Naive thymus-derived CD4-positive, alpha-beta T cell (primary cell): ENCODE measurements at regions of chr13 and their contacts with region 1.

Region 1: GRCh38 chr13:73880365-73880764 is 253.8 kb downstream of the KLF12 start:
- DNase-seq: no peak
- ATAC-seq: no peak
- H3K4me3 ChIP-seq: no peak overlapping the region
- H3K4me3 Mint-ChIP-seq: peak overlapping the region in 8 of 10 donors; percentile 0 to 55 (median 21)
- H3K27ac ChIP-seq: no peak overlapping the region
- H3K27ac Mint-ChIP-seq: peak overlapping the region in 5 of 9 donors; percentile 16 to 69 (median 31)
- H3K4me1 ChIP-seq: peaks cover 12 to 16% of the 10 kb centered on the region in 2 donors
- H3K4me1 Mint-ChIP-seq: peaks cover 10 to 78% (median 57%) of the 10 kb centered on the region in 7 donors
- H3K27me3 ChIP-seq: no peaks in the 10 kb centered on the region
- H3K27me3 Mint-ChIP-seq: no peaks in the 10 kb centered on the region

Region 2: DNA sequence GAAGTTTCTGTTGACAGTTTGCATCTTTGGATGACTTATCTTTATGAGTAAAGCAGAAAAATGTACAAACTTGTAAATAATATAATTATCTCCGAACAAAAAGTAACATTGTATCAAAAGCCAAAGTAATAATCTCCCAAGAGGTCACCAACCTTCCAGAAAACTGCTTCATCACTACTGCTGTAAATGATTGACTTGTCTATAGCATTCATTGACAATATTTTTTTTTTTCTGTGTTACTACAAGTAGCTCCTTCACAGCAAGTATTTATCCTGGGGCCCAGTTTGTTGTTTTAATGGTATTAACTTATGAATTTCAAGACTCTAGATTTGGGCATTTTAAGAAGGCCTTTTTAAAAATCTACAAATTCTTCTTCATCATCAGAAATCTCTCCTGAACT is 11.4 kb after region 1 on chr13:
- CTCF ChIA-PET with region 1: interaction called, 3 read pairs
- POLR2A ChIA-PET with region 1: no interaction called
- intact Hi-C with region 1: loop called in 1 of 2 experiments (anchors 1 kb)
- DNase-seq: no peak
- ATAC-seq: no peak
- H3K4me3 ChIP-seq: no peak overlapping the region
- H3K4me3 Mint-ChIP-seq: no peak overlapping the region
- H3K27ac ChIP-seq: no peak overlapping the region
- H3K27ac Mint-ChIP-seq: peak overlapping the region in 4 of 9 donors; percentile 2 to 44 (median 12)
- H3K4me1 ChIP-seq: no peaks in the 10 kb centered on the region
- H3K4me1 Mint-ChIP-seq: peaks cover 0 to 52% (median 37%) of the 10 kb centered on the region in 7 donors
- H3K27me3 ChIP-seq: no peaks in the 10 kb centered on the region
- H3K27me3 Mint-ChIP-seq: no peaks in the 10 kb centered on the region

Region 3: GRCh38 chr13:73924607-73925006 is 44.2 kb after region 1 on chr13:
- CTCF ChIA-PET with region 1: no interaction called
- POLR2A ChIA-PET with region 1: no interaction called
- intact Hi-C with region 1: loop called in 1 of 2 experiments (anchors 5 kb)
- DNase-seq: no peak
- ATAC-seq: no peak
- H3K4me3 ChIP-seq: no peak overlapping the region
- H3K4me3 Mint-ChIP-seq: peak overlapping the region in 6 of 10 donors; percentile 10 to 49 (median 41)
- H3K27ac ChIP-seq: no peak overlapping the region
- H3K27ac Mint-ChIP-seq: peak overlapping the region in 5 of 9 donors; percentile 12 to 45 (median 33)
- H3K4me1 ChIP-seq: peaks cover 10 to 38% of the 10 kb centered on the region in 2 donors
- H3K4me1 Mint-ChIP-seq: peaks cover 21 to 95% (median 85%) of the 10 kb centered on the region in 7 donors
- H3K27me3 ChIP-seq: no peaks in the 10 kb centered on the region
- H3K27me3 Mint-ChIP-seq: no peaks in the 10 kb centered on the region